ENCODE measurements at regions of chr3 and their contacts with region 1.

Region 1: GRCh38 chr3:66500576-66501482 is at the start of gene LRIG1:
- DNase-seq: peak; percentile 100
- H3K4me3 ChIP-seq: peak within 1 kb of the TSS; percentile 89 to 100 (median 91)
- H3K27ac ChIP-seq: peak within 1 kb of the TSS; percentile 96 to 99 (median 97)
- H3K4me1 ChIP-seq: peaks cover 28 to 55% (median 50%) of the 10 kb centered on the region in 4 donors
- H3K27me3 ChIP-seq: no peaks in the 10 kb centered on the region
- CTCF ChIP-seq: peak; percentile 3 to 56 (median 5)
- EP300 ChIP-seq: no peak
- POLR2A ChIP-seq: peak; percentile 73
- total RNA-seq, gene LRIG1: 95.3 to 136 (median 131) TPM

Region 2: GRCh38 chr3:66021731-66022141 is 479.1 kb before region 1 on chr3:
- intact Hi-C with region 1: no loop called
- DNase-seq: no peak
- H3K4me3 ChIP-seq: no peak overlapping the region
- H3K27ac ChIP-seq: no peak overlapping the region
- H3K4me1 ChIP-seq: peaks cover 4 to 26% (median 11%) of the 10 kb centered on the region in 4 donors
- H3K27me3 ChIP-seq: no peaks in the 10 kb centered on the region
- CTCF ChIP-seq: no peak
- EP300 ChIP-seq: no peak
- POLR2A ChIP-seq: no peak

Region 3: DNA sequence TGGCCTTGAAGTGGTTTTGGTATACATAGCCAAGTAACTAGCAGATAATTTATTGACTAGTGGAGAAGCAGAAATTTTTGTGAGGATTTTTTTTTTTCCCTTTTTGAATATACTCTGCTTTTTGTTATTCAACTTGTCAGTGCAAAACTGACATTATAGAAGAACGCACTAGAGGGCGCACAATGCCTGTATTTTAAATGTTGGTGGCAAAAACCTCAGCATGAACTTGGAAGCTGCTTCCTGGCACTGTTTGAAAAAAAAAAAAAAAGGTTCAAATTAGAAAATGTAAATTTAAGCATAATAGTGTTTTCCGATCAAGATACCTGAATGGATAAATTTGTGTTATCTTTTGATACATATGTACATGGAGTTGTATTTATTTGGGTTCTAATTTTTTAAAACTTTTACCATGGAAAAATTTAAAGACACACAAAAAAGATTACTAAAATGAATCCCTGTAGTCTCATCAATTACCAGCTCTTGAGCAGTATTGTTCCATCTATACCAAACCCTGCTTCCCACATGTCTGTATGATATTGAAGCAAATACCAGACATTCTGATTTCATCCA is 224.0 kb before region 1 on chr3:
- intact Hi-C with region 1: loop called (anchors 2 kb)
- DNase-seq: no peak
- H3K4me3 ChIP-seq: no peak overlapping the region
- H3K27ac ChIP-seq: no peak overlapping the region
- H3K4me1 ChIP-seq: no peaks in the 10 kb centered on the region
- H3K27me3 ChIP-seq: no peaks in the 10 kb centered on the region
- CTCF ChIP-seq: peak; percentile 66 to 73 (median 71)
- EP300 ChIP-seq: no peak
- POLR2A ChIP-seq: no peak

Region 4: DNA sequence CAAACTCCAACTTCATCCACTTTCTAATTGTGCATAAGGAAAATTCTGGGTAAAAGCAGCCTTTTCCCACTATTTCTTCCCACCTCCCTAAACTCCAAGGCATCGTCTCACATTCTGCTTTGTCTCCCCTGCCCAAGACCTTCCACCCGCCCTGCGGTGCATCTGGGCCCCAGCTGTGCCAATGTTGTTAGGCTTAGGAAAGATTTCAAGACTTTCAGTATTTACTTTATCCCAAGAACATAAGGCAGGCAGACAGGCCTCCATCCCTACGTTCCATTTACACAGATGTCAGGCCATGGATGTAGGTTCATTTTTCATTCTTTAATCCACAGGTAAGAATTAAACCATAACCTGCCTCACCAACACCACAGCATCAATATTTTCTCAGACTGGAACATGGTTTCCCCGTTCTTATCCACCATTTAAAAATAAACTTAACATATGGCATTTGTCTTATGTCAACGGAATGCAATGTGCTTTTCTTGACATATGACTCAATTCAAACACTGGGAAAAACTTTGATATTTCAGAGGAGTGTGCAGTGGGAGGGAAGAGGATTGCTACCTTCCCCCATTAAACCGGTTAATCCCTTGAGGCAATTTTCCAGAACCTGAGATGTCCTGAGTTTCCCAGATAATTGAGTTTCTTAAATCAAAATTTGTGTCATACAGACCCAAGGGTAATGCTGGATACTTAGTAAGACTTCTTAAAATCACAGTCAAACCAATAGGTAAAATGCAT is 238.0 kb after region 1 on chr3:
- intact Hi-C with region 1: loop called (anchors 10 kb)
- DNase-seq: no peak
- H3K4me3 ChIP-seq: no peak overlapping the region
- H3K27ac ChIP-seq: peak overlapping the region; percentile 6 to 70 (median 32)
- H3K4me1 ChIP-seq: peaks cover 0 to 22% (median 16%) of the 10 kb centered on the region in 4 donors
- H3K27me3 ChIP-seq: no peaks in the 10 kb centered on the region
- CTCF ChIP-seq: no peak
- EP300 ChIP-seq: no peak
- POLR2A ChIP-seq: no peak

Region 5: DNA sequence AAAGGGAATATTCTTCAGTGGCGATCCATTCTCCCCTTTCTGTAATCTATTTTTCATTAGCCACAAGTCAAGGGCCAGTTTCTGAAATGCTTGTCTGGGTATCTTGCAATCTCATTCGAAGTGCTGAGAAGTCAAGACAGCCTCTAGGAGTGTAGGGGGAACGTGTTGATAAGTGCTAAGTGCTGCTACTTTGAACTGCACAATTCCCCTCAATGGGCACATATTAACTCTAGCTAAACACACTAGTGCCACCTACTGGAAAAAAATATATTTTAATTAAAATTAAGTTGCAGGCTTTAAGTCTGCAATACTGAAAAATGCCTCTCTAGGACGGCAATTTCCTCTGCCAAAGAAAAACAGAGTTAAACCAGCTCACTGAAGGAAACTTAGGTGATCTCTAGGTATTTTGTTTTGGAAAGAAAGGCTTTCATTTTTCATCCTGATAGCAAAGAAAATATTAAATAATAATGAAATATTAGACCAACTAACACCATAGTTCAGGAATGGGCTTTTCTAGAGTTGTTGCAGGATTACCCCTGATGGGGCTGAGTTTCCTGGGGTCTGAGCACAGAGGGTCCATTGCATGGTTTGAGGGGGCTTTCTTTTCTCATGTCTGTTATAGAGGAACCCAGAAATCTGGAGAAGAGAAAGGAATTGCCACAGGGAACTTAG is 315.4 kb after region 1 on chr3:
- intact Hi-C with region 1: loop called (anchors 5 kb)
- DNase-seq: no peak
- H3K4me3 ChIP-seq: no peak overlapping the region
- H3K27ac ChIP-seq: no peak overlapping the region
- H3K4me1 ChIP-seq: peaks cover 0 to 20% (median 14%) of the 10 kb centered on the region in 4 donors
- H3K27me3 ChIP-seq: no peaks in the 10 kb centered on the region
- CTCF ChIP-seq: peak; percentile 64 to 69 (median 65)
- EP300 ChIP-seq: no peak
- POLR2A ChIP-seq: no peak